ENCODE measurements at regions of chr6 and their contacts with region 1.

Region 1: DNA sequence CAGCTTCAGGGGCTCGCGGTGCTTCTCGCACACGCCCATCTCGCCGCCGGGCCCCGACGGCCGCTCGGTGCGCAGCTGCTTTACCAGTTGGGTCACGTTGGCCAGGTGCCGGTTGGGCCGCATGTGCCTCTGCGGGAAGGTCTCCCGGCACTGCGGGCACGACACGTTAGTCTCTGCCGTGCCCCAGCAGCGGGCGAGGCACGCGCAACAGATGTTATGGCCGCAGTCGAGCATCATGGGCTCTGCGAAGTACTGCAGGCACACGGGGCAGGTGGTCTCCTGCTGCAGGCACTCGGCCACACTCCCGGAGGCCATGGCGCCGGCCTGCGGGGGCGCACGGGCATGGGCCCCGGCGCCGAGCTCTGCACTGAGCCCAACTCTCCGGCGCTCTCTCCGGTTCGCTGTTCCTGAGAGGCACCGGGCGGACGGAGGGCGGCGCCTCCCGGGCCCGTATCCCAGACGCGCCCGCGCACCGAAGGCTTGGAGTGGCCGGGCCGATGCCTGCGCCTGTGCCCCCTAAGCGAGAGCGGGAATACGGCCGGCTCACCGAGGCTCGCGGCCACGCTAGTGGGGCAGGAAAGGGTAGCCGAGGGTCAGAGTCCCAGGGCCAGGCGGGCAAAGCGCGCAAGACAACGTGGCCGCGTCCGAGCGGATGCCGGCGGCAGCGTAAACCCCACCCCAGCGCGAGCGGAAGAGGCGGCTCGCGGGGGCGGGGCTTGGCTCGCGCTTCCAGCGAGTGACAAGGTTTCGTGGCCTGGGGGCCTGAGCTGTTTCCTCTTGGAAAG is at the start of gene TRIM27:
- DNase-seq: peak; percentile 92 to 94
- ATAC-seq: peak; percentile 96 to 99 (median 98)
- H3K4me3 ChIP-seq: peak within 1 kb of the TSS; percentile 80 to 100 (median 92)
- H3K27ac ChIP-seq: peak within 1 kb of the TSS; percentile 93 to 99 (median 98)
- H3K4me1 ChIP-seq: peaks cover 0 to 50% (median 17%) of the 10 kb centered on the region in 9 donors
- H3K27me3 ChIP-seq: no peaks in the 10 kb centered on the region
- CTCF ChIP-seq: peak in 2 of 9 donors; percentile 9 to 26
- total RNA-seq, gene TRIM27: 14.7 to 23.1 (median 17.6) TPM

Region 2: GRCh38 chr6:28618898-28619555 is 304.5 kb before region 1 on chr6:
- intact Hi-C with region 1: no loop called
- DNase-seq: no peak
- ATAC-seq: no peak
- H3K4me3 ChIP-seq: no peak overlapping the region
- H3K27ac ChIP-seq: no peak overlapping the region
- H3K4me1 ChIP-seq: no peaks in the 10 kb centered on the region
- H3K27me3 ChIP-seq: peaks cover 12 to 72% (median 66%) of the 10 kb centered on the region in 7 donors
- CTCF ChIP-seq: no peak

Region 3: GRCh38 chr6:28634761-28635546 is 288.6 kb before region 1 on chr6:
- intact Hi-C with region 1: no loop called
- DNase-seq: no peak
- ATAC-seq: peak in 4 of 8 donors; percentile 17 to 61 (median 36)
- H3K4me3 ChIP-seq: peak overlapping the region in 9 of 10 donors; percentile 11 to 50 (median 33)
- H3K27ac ChIP-seq: no peak overlapping the region
- H3K4me1 ChIP-seq: peaks cover 0 to 10% (median 0%) of the 10 kb centered on the region in 9 donors
- H3K27me3 ChIP-seq: peaks cover 0 to 93% (median 74%) of the 10 kb centered on the region in 7 donors
- CTCF ChIP-seq: no peak

Region 4: GRCh38 chr6:28895134-28895812 is 28.2 kb before region 1 on chr6:
- intact Hi-C with region 1: loop called in 6 of 10 experiments (anchors 1 to 2 kb)
- DNase-seq: peak; percentile 85 to 95
- ATAC-seq: peak; percentile 88 to 93 (median 91)
- H3K4me3 ChIP-seq: peak overlapping the region; percentile 50 to 78 (median 70)
- H3K27ac ChIP-seq: peak overlapping the region; percentile 91 to 99 (median 97)
- H3K4me1 ChIP-seq: peaks cover 0 to 20% (median 10%) of the 10 kb centered on the region in 9 donors
- H3K27me3 ChIP-seq: no peaks in the 10 kb centered on the region
- CTCF ChIP-seq: no peak

Region 5: DNA sequence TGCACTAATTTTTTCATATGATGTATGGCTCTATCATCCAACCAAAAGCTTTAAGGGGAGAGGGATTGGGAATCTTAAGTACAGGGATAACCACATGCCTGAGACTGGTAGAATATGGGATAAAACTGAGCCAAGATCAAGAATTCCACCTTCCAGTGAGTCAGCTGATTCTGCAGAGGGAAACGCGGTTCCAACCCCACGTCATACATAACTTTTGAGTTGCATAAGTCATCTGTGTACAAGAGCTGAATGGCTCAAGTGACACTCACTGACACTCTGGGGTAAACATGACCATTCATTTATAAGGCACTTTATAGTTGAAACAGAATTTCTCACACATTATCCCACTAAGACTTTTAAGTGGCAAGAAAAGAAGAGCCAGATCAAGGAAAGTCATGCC is 16.1 kb before region 1 on chr6:
- intact Hi-C with region 1: loop called in 1 of 10 experiments (anchors 1 kb)
- DNase-seq: no peak
- ATAC-seq: peak in 3 of 8 donors; percentile 20 to 62 (median 59)
- H3K4me3 ChIP-seq: no peak overlapping the region
- H3K27ac ChIP-seq: no peak overlapping the region
- H3K4me1 ChIP-seq: peaks cover 0 to 17% (median 0%) of the 10 kb centered on the region in 9 donors
- H3K27me3 ChIP-seq: no peaks in the 10 kb centered on the region
- CTCF ChIP-seq: no peak